Head of caudate nucleus (tissue), 42 donors: ENCODE measurements at regions of chr13 and their contacts with region 1.

Region 1: DNA sequence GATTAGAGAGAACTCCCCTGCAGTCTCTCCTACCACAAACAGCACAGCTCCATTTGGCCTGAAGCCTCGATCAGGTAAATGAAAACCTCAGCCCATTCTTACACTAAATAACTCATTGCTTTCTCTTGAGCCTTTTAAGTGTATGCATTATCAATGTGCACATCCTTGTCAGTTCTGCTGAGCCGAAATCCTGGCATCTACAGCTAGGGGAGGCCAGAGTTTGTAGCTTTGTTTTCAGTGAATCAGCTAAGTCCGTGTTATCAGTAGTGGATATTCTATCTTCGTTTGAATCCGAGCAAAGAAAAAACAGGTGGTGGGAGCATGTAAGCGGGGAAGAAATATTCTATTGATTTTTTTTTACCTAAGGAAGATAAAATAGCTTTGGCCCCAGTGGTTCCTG is 84.4 kb downstream of the ESD start:
- DNase-seq: no peak

Region 2: DNA sequence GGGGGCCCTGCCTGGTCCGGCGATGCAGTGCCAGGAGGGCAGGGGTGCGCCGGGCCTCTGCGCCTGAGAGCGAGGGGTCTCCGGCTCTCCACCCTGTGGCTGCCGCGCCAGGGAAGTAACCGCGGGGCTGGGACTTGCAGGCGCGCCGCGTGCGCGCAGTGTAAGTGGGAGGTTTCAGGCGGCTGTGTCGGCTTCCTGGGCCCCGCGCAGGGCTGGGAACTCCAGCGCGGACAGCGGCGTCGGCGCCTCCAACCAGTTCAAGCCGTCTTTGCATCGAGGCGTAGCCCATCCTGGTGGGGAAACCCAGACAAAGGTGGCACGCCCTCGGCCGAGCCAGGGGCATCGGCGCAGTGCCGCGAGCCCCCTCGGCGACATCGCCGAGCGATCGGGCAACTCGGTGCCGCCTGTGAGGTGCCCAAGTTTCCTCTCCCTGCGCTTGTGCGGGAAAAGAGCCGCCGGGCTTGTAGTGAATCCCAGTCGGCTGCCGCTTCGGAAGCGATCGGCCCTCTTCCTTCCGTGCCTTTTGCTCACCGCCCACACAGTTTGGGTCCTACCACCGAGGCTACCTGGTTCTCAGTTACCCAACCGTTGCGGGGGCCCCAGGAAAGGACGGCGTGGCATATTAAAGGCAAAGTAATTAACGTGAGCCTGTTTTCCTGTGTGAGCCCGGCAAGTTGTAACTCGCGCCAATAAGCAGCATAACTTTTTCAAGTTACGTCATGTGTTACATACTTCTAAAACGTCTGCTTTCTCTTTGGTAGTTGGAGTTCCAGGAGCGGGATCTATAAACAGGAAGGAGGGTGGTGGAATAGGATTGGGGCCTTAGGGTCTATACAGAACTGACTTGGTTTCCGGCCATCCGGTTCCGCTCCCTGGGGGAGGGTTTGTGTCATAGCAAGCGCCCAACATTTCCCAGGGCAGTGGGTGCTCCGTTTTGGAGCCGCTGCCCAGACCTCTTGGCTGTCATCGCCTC is 158.4 kb before region 1 on chr13:
- intact Hi-C with region 1: loop called (anchors 10 kb)
- DNase-seq: peak in 40 of 42 donors; percentile 30 to 74 (median 52)